Adrenal gland (tissue), 19 donors: ENCODE measurements at regions of chr3 and their contacts with region 1.

Region 1: GRCh38 chr3:16550676-16551341 is 37.3 kb upstream of the RFTN1 start:
- DNase-seq: peak; percentile 64 to 90 (median 78)
- H3K4me3 ChIP-seq: no peak overlapping the region
- H3K27ac ChIP-seq: no peak overlapping the region
- H3K4me1 ChIP-seq: no peaks in the 10 kb centered on the region
- H3K27me3 ChIP-seq: no peaks in the 10 kb centered on the region
- CTCF ChIP-seq: peak; percentile 56 to 96 (median 92)
- POLR2A ChIP-seq: no peak

Region 2: DNA sequence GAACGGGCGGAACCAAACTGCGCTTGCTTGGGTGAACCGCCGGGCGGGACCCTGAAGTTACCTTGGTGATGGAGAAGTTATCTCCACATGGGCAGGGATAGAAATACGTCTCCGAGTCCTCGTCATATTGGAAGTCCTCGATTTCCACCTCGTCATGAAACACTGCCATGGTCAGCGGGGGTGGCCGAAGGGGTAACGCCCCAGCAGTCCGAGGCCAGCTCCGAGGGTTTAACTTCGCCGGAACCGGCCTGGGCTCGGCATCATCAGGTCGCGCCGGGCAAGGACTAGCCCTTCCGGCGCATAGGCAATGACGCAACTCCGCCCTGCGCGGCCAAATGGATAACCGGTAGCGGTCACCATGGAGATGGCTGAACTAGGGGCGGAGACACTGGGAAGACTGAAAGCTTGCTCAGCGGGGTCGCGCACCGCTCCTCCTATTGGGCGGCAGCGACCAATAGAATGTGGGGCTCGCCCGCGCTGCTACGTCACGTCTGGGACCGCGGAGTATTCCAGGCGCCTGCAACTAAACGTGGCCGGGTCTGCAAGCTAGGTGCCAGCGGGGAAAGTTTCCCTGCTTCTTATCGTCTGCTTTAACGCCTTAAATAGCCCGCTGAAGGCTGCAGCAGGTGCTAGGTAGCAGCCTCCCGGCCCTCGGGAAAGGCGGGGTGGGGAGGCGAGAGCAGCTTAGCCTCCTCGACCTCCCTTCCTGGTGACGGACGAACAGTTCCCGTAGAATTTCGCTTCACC is 285.9 kb before region 1 on chr3 and contains the starts of genes DPH3 and OXNAD1:
- intact Hi-C with region 1: loop called (anchors 2 to 5 kb)
- DNase-seq: peak; percentile 100
- H3K4me3 ChIP-seq: peak within 1 kb of the TSS; percentile 7 to 99 (median 69)
- H3K27ac ChIP-seq: peak within 1 kb of the TSS; percentile 85 to 95 (median 90)
- H3K4me1 ChIP-seq: peaks cover 12 to 51% of the 10 kb centered on the region in 2 donors
- H3K27me3 ChIP-seq: no peaks in the 10 kb centered on the region
- CTCF ChIP-seq: peak in 4 of 6 experiments; percentile 39 to 65 (median 50)
- POLR2A ChIP-seq: peak; percentile 24 to 92
- total RNA-seq, gene DPH3: 12.9 to 39.7 (median 19.2) TPM
- total RNA-seq, gene OXNAD1: 6.5 to 22.2 (median 11.9) TPM

Region 3: GRCh38 chr3:16290007-16290826 is 260.6 kb before region 1 on chr3:
- intact Hi-C with region 1: loop called (anchors 5 kb)
- DNase-seq: peak; percentile 29 to 77 (median 50)
- H3K4me3 ChIP-seq: no peak overlapping the region
- H3K27ac ChIP-seq: no peak overlapping the region
- H3K4me1 ChIP-seq: peaks cover 0 to 5% of the 10 kb centered on the region in 2 donors
- H3K27me3 ChIP-seq: no peaks in the 10 kb centered on the region
- CTCF ChIP-seq: peak; percentile 56 to 84 (median 74)
- POLR2A ChIP-seq: no peak

Region 4: DNA sequence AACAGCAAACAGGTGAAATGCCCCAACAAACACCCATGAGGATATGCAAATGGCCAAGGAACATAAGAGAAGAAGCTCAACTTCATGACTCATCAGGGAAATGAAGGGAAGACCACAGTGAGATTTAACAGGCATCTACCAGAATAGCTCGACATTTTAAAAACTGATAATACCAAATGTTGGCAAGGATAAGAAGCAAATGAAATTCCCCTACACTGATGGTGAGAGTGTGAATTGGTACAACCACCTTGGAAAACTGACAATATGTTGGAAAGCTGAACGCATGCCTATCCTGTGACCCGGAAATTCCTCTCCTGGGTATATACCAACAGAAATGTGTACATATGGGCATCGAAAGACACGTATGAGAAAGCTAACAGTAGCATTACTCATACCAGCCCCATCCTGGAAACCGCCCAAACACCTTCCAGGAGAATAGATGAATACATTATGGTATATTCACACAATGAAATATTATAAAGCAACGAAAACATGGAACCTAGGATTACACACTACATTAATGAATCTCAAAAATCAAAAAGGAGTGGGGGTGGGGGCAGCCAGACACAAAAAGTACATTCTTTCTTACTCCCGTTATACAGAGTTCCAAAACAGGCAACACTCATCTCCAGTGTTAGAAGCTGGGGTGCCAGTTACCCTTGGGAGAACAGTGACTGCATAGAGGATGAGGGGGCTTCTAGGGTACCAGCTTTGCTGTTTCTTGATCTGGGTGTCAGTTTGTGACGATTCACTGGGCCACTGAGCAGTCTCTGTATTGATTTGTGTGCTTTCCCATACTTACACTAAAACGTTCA is 54.2 kb before region 1 on chr3:
- intact Hi-C with region 1: no loop called
- DNase-seq: no peak
- H3K4me3 ChIP-seq: no peak overlapping the region
- H3K27ac ChIP-seq: no peak overlapping the region
- H3K4me1 ChIP-seq: peaks cover 0 to 12% of the 10 kb centered on the region in 2 donors
- H3K27me3 ChIP-seq: no peaks in the 10 kb centered on the region
- CTCF ChIP-seq: no peak
- POLR2A ChIP-seq: no peak